Activated naive CD4-positive, alpha-beta T cell treated with anti-CD3 and anti-CD28 coated beads, Interleukin-2, amount 10 ng/mL, durations not matched to agents 7 days and 5 days (primary cell): ENCODE measurements at regions of chr4 and their contacts with region 1.

Region 1: GRCh38 chr4:40309250-40309774 is 25.8 kb upstream of the CHRNA9 start:
- DNase-seq: peak; percentile 95
- H3K4me3 Mint-ChIP-seq: peak overlapping the region; percentile 62
- H3K27ac Mint-ChIP-seq: peak overlapping the region; percentile 97
- H3K4me1 Mint-ChIP-seq: peaks cover 86% of the 10 kb centered on the region
- H3K27me3 Mint-ChIP-seq: no peaks in the 10 kb centered on the region

Region 2: GRCh38 chr4:40152637-40153036 is 156.7 kb before region 1 on chr4:
- CTCF ChIA-PET with region 1: interaction called, 20 read pairs
- DNase-seq: peak; percentile 31
- H3K4me3 Mint-ChIP-seq: no peak overlapping the region
- H3K27ac Mint-ChIP-seq: peak overlapping the region; percentile 24
- H3K4me1 Mint-ChIP-seq: peaks cover 36% of the 10 kb centered on the region
- H3K27me3 Mint-ChIP-seq: no peaks in the 10 kb centered on the region

Region 3: DNA sequence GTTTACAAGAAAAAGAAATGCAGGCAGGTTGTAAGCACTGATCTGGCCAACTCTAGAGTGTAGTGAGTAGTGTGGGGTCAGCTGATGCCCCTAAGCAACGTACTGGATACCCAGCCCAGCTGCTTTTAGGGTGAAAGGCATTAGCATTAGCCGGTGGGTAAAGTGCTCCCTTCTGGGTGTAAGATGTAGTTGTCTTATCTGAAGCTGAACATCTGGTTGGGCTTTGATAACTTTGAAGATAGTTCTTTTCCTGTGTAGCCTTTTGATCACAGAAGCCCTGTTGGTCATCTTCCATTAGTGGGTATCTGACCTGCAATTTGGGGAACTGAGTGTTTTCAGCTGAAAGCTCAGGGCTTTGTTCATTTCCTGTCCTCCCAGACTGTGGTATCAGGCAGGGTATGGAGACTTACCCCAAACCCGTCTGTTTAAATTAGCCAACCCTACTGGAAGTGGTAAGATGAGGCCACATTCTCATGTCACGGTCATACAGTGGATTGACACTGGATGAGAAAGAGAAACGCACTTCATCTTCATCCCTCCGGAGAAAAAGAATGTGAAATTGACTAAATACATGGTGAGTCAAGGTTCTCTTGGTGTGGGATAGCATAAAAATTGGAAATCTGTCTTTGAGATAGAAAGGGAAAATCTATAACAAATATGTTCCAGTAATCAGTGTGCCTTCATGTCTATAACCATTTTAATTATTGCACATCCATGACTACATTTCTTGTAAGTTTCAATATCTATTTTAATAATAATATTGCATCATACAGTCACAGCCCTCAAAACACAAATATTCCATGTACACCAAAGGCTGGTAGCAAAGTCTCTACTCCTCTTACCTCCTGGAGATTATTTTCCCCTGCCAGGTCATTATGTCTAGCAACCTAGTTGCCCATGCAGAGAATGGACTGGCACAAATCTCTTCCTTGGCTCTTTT is 103.8 kb before region 1 on chr4:
- CTCF ChIA-PET with region 1: interaction called, 12 read pairs
- DNase-seq: peak; percentile 52
- H3K4me3 Mint-ChIP-seq: peak overlapping the region; percentile 93
- H3K27ac Mint-ChIP-seq: peak overlapping the region; percentile 96
- H3K4me1 Mint-ChIP-seq: peaks cover 69% of the 10 kb centered on the region
- H3K27me3 Mint-ChIP-seq: no peaks in the 10 kb centered on the region

Region 4: DNA sequence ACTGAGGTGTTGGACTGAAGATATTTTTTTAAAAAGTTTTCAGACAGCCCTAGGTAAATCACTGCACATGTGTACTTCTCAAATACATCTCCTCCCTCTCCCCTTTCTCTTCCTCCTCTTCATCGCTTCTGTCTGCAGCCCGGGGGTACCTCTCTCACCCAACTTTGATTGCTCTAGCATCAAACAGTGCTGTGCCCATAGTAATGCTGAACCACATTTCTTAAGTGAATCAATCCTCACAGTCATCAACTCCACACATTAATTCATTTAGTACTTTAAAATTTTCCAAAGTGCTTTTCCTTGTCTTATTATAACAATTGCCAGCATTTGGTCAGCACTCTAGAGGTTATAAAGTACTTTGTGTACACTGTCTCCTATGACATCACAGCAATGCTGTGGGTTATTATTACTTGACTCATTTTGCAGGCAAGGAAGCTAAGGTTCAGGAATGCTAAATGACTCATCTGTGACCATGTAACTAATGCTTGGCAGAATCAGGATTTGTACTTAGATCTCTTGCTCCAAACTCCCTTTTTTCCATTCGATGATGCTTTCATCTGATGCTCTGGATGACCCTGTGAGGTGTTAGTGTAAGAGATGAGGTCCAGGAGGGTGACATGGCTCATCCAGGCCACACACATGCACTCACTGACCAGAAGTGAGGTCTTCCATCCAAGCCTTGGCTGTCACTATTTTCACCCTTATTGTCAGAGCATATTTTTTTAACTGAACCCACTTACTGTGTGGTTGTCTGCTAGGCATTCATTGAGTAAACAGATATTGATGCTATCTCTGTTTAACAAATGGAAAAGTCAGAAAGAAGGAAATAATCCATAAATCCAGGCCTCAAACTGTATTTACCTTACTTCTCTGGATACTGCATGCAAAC is 53.7 kb before region 1 on chr4:
- CTCF ChIA-PET with region 1: interaction called, 22 read pairs
- DNase-seq: no peak
- H3K4me3 Mint-ChIP-seq: peak overlapping the region; percentile 24
- H3K27ac Mint-ChIP-seq: peak overlapping the region; percentile 86
- H3K4me1 Mint-ChIP-seq: peaks cover 81% of the 10 kb centered on the region
- H3K27me3 Mint-ChIP-seq: no peaks in the 10 kb centered on the region

Region 5: GRCh38 chr4:40325189-40326019 is 16.1 kb after region 1 on chr4:
- CTCF ChIA-PET with region 1: interaction called, 41 read pairs
- DNase-seq: peak; percentile 79
- H3K4me3 Mint-ChIP-seq: no peak overlapping the region
- H3K27ac Mint-ChIP-seq: no peak overlapping the region
- H3K4me1 Mint-ChIP-seq: peaks cover 38% of the 10 kb centered on the region
- H3K27me3 Mint-ChIP-seq: peaks cover 6% of the 10 kb centered on the region